ENCODE measurements at regions of chr20 and their contacts with region 1.

Region 1: GRCh38 chr20:58179432-58180099 is 48.9 kb downstream of the ANKRD60 start:
- DNase-seq: peak in 1 of 2 experiments; percentile 73
- H3K4me3 ChIP-seq: peak overlapping the region; percentile 40
- H3K27ac ChIP-seq: no peak overlapping the region
- H3K4me1 ChIP-seq: peaks cover 15% of the 10 kb centered on the region
- H3K27me3 ChIP-seq: no peaks in the 10 kb centered on the region
- CTCF ChIP-seq: peak; percentile 99

Region 2: DNA sequence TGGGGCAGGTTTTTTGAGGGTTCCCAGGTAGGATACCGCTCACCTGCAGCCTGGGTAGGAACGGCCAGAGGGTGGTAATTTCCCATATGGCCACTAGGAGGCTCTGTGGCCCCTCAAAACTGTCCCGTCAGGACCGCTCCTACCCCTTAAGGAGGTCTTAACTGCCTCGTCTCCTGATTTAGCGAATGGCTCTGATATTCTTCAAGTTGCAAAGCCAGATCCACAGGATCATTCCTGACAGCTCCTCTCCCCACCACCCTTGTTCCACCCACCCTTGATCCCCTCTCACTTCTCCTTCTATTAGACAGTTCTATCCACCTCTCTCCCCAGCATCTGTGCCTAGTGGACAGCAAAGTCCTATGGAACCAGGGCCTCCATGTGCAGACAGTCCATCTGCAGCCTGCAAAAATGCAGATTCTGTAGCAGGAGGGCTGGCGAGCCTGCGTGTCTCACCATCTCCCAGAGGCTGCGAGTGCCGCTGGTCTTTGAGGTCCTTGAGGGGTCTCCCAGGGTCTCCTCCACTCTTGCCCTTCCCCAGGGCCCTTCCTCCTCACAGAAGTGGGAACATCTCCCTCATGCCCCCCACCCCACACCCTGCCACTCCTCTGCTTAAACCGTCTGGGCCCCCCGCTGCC is 525.1 kb before region 1 on chr20:
- CTCF ChIA-PET with region 1: no interaction called
- POLR2A ChIA-PET with region 1: no interaction called
- intact Hi-C with region 1: loop called (anchors 1 kb)
- DNase-seq: peak in 1 of 2 experiments; percentile 67
- H3K4me3 ChIP-seq: no peak overlapping the region
- H3K27ac ChIP-seq: no peak overlapping the region
- H3K4me1 ChIP-seq: no peaks in the 10 kb centered on the region
- H3K27me3 ChIP-seq: no peaks in the 10 kb centered on the region
- CTCF ChIP-seq: peak; percentile 98

Region 3: DNA sequence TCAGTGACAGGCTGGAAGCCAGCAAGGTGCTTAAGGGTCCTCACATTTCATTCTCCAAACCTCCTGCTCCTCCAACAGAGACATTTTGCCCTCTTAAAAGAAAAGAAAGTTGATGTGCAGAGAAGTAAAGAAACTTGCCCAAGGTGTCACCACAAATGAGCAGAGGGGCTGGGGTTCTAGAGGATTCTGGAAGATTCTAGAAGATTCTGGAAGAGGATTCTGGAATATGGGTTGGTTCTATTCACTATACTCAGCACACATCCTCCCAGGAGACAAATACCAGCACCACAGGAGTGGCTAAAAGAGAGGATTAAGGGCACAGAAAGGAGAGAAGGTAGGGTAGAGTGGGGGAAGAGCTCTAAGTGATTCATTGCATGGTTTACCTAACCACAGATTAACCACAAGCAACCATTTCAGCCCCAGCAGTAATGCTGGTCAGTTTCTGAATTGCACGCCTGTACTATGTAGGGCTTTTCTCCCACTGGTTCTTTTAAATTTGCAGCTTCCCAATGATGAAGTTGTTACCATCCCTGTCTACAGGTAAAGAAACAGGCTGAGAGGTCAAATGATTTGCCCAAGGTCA is 277.2 kb before region 1 on chr20:
- CTCF ChIA-PET with region 1: no interaction called
- POLR2A ChIA-PET with region 1: interaction called, 8 read pairs
- intact Hi-C with region 1: loop called (anchors 5 kb)
- DNase-seq: peak; percentile 43 to 75
- H3K4me3 ChIP-seq: no peak overlapping the region
- H3K27ac ChIP-seq: no peak overlapping the region
- H3K4me1 ChIP-seq: peaks cover 30% of the 10 kb centered on the region
- H3K27me3 ChIP-seq: no peaks in the 10 kb centered on the region
- CTCF ChIP-seq: peak; percentile 45; the same call in 1 of the 2 replicates

Region 4: GRCh38 chr20:58017237-58017969 is 162.2 kb before region 1 on chr20:
- CTCF ChIA-PET with region 1: no interaction called
- POLR2A ChIA-PET with region 1: no interaction called
- intact Hi-C with region 1: loop called (anchors 5 kb)
- DNase-seq: peak; percentile 80 to 95
- H3K4me3 ChIP-seq: no peak overlapping the region; the same call in 1 of the 2 replicates
- H3K27ac ChIP-seq: peak overlapping the region; percentile 93
- H3K4me1 ChIP-seq: peaks cover 87% of the 10 kb centered on the region
- H3K27me3 ChIP-seq: no peaks in the 10 kb centered on the region
- CTCF ChIP-seq: no peak

Region 5: DNA sequence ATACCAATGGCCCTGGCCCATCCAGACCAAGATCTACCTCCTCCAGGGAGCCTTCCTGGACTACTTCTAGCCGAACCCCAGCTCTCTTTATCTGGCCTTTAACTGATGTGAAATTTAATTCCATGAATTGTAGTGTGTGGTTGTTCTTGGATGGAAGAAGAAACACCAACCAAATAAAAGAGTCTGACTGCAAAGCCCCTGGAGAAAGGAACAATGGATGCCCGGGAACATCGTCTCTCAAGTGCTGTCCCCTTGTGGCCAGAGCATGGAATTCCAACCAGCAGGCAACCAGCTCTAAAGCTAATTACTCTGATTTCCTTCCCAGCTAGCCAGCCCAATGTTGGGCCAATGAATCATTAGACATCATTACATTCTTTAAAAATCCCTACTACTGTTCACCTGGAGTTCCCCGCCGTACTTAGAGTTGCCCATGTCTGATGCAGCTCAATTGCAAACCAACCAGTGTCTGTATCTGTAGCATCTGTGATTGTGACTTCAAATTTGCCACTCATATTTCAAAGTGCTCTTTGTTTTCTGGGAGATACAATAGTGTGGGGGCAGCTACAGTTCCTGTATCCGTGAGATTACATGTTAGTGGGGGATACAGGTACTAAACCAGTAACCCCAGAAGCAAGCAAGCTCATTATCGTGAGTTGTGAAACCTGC is 92.2 kb before region 1 on chr20:
- CTCF ChIA-PET with region 1: interaction called, 8 read pairs
- POLR2A ChIA-PET with region 1: no interaction called
- intact Hi-C with region 1: loop called (anchors 1 kb)
- DNase-seq: peak; percentile 50 to 52
- H3K4me3 ChIP-seq: no peak overlapping the region
- H3K27ac ChIP-seq: no peak overlapping the region
- H3K4me1 ChIP-seq: 0 out of 2 replicates have a peak, but pooled peaks cover 9% of the 10 kb centered on the region
- H3K27me3 ChIP-seq: no peaks in the 10 kb centered on the region
- CTCF ChIP-seq: peak; percentile 95

Region 6: DNA sequence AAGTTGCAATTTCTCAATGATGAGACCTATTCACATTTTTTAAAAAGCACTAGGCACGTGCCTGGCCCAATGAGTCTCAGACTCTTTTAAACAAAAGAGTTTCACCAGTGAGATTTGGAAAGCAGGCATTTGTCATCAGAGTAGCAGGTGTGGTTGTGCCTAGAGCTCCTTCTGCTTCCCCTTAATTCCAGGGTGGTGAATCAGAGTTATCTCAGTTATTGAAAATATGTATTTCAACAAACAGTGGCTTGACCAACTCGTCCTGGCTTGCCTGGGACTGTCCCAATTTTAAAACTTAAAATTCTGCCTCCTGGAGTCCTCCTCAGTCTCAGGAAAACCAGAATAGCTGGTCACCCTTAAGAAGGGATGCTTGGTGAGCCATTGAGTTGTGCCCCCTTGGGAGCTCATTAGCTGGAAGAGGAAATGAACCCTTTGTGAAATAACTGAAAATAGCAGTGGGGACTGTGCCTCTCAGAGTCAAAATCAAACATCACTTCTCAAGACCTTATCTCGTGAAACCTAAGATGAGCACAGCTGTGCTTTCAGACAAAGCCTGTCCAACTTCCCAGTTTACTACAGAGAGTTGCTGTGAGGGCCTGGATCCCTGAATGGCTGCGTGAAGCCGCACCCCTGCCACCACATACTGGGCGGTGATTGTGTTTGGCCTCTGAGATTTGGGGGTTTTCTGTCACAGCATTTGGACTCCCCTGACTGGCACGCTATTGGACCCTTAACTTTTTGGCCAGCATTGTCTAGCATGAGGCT is 67.4 kb before region 1 on chr20:
- CTCF ChIA-PET with region 1: interaction called, 3 read pairs
- POLR2A ChIA-PET with region 1: no interaction called
- intact Hi-C with region 1: loop called (anchors 1 kb)
- DNase-seq: peak; percentile 72 to 98
- H3K4me3 ChIP-seq: no peak overlapping the region
- H3K27ac ChIP-seq: peak overlapping the region; percentile 86
- H3K4me1 ChIP-seq: peaks cover 59% of the 10 kb centered on the region
- H3K27me3 ChIP-seq: no peaks in the 10 kb centered on the region
- CTCF ChIP-seq: no peak